Activated CD8-positive, alpha-beta T cell treated with anti-CD3 and anti-CD28 coated beads, Interleukin-2, amount 10 ng/mL, durations not matched to agents 7 days and 5 days (primary cell): ENCODE measurements at regions of chr1 and their contacts with region 1.

Region 1: GRCh38 chr1:207084701-207085180 is 3.9 kb upstream of the C4BPB start:
- DNase-seq: peak; percentile 81
- ATAC-seq: peak; percentile 82
- H3K4me3 Mint-ChIP-seq: no peak overlapping the region
- H3K27ac Mint-ChIP-seq: no peak overlapping the region
- H3K4me1 Mint-ChIP-seq: peaks cover 30% of the 10 kb centered on the region
- H3K27me3 Mint-ChIP-seq: peaks cover 18% of the 10 kb centered on the region

Region 2: DNA sequence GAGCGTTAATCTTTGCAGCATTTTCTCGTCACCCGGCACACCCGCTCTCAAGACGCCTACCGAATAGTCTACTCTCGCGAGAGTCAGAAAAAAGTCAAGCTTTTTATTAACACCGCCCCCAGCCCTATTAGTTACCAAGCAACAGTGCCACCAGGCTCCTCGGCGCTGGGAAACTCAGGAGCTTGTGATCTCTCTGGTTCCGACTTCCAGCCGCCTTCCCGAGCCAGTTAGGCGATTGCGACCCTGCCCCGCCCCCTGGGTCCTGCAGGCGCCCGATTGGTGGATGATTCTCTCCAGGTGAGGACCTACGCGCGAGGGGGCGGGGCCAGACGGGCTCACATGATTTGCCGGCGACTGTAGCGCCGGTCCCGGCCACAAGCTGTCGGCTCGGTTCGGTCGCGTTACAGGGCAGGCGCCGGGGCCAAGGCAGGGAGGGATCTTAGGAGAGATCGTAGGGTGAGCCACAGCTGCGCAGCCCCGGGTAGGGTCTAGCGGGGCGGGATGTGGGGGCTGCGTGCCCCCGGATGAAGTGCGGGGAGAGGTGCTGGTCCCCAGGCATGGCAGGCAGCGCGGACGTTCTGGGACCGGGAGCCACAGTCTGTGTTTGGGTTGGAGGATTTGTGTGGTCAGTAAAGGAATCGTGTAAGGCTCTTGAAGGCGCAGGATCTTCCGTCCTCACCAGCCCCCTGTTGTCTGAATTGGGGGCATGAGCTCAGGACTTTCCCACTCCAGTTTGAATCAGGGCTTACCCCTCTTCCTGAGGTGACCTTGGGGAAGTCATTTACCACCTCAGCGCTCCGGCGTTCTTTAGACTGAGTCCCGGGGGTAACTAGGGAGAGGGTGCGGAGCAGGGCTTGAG is 31.6 kb before region 1 on chr1 and contains the start of gene PFKFB2:
- CTCF ChIA-PET with region 1: interaction called, 67 read pairs
- POLR2A ChIA-PET with region 1: no interaction called
- DNase-seq: peak; percentile 96
- ATAC-seq: peak; percentile 93
- H3K4me3 Mint-ChIP-seq: peak within 1 kb of the TSS; percentile 86
- H3K27ac Mint-ChIP-seq: peak within 1 kb of the TSS; percentile 92
- H3K4me1 Mint-ChIP-seq: peaks cover 46% of the 10 kb centered on the region
- H3K27me3 Mint-ChIP-seq: no peaks in the 10 kb centered on the region
- total RNA-seq, gene PFKFB2: 5.0 to 6.6 TPM

Region 3: GRCh38 chr1:207069858-207070506 is 14.8 kb before region 1 on chr1:
- CTCF ChIA-PET with region 1: interaction called, 16 read pairs
- POLR2A ChIA-PET with region 1: no interaction called
- DNase-seq: no peak
- ATAC-seq: peak; percentile 8
- H3K4me3 Mint-ChIP-seq: no peak overlapping the region
- H3K27ac Mint-ChIP-seq: peak overlapping the region; percentile 88
- H3K4me1 Mint-ChIP-seq: peaks cover 53% of the 10 kb centered on the region
- H3K27me3 Mint-ChIP-seq: no peaks in the 10 kb centered on the region

Region 4: DNA sequence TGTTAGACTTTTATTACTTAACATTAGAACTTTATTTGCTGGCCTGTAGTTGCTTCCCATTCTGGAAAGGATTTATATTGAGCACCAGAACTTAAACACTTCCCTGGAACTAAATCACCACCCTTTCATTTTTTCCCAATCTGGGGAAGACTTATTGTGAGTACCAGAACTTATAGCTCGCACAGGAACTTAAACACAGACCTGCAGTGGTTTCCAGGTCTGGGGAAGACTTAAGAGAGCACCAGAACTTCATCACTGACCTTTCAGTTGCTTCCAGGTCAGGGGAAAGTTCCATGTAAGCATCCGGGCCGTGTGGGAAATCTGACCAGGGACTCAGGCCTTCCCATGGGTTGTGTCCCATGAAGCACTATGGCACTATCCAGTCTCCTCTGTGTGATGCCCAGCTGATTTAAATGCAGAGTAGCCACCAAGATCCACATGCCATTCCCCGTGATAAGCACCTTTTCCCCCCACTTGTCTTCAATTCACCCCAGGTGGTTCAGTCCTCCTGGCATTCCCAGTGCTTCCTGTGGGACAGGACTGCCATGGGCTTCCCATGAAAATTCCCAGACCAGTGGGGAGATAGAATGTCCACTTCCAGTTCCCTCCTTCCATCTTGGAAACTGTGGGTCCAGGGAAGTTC is 68.2 kb after region 1 on chr1:
- CTCF ChIA-PET with region 1: no interaction called
- POLR2A ChIA-PET with region 1: no interaction called
- DNase-seq: no peak
- ATAC-seq: no peak
- H3K4me3 Mint-ChIP-seq: no peak overlapping the region
- H3K27ac Mint-ChIP-seq: no peak overlapping the region
- H3K4me1 Mint-ChIP-seq: no peaks in the 10 kb centered on the region
- H3K27me3 Mint-ChIP-seq: no peaks in the 10 kb centered on the region

Region 5: DNA sequence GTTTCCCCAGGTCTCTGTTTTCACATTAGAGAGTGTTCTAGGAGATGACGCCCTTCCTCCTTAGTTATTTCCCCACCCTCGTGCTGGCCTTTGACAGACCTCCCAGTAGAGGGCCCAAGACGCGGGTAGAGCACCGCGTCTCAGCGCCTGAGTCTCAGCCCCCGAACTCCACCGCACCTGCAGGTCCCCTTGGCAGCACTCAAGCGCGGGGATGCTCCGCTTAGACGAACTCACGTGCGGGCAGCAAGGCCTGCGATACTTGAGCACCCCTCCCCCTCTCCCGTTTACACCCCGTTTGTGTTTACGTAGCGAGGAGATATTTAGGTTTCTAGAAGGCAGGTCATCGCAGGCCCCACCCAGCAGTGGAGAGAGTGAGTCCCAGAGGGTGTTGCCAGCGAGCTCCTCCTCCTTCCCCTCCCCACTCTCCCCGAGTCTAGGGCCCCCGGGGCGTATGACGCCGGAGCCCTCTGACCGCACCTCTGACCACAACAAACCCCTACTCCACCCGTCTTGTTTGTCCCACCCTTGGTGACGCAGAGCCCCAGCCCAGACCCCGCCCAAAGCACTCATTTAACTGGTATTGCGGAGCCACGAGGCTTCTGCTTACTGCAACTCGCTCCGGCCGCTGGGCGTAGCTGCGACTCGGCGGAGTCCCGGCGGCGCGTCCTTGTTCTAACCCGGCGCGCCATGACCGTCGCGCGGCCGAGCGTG is 236.5 kb after region 1 on chr1 and contains the start of gene CD55:
- CTCF ChIA-PET with region 1: interaction called, 8 read pairs
- POLR2A ChIA-PET with region 1: interaction called, 13 read pairs
- DNase-seq: peak; percentile 100
- ATAC-seq: peak; percentile 93
- H3K4me3 Mint-ChIP-seq: peak within 1 kb of the TSS; percentile 92
- H3K27ac Mint-ChIP-seq: peak within 1 kb of the TSS; percentile 99
- H3K4me1 Mint-ChIP-seq: peaks cover 29% of the 10 kb centered on the region
- H3K27me3 Mint-ChIP-seq: no peaks in the 10 kb centered on the region
- total RNA-seq, gene CD55: 82.1 to 85.5 TPM

Region 6: GRCh38 chr1:207336559-207337467 is 252.1 kb after region 1 on chr1:
- CTCF ChIA-PET with region 1: interaction called, 16 read pairs
- POLR2A ChIA-PET with region 1: interaction called, 4 read pairs
- DNase-seq: peak; percentile 88
- ATAC-seq: peak; percentile 78
- H3K4me3 Mint-ChIP-seq: peak overlapping the region; percentile 51
- H3K27ac Mint-ChIP-seq: peak overlapping the region; percentile 93
- H3K4me1 Mint-ChIP-seq: peaks cover 71% of the 10 kb centered on the region
- H3K27me3 Mint-ChIP-seq: no peaks in the 10 kb centered on the region

Region 7: DNA sequence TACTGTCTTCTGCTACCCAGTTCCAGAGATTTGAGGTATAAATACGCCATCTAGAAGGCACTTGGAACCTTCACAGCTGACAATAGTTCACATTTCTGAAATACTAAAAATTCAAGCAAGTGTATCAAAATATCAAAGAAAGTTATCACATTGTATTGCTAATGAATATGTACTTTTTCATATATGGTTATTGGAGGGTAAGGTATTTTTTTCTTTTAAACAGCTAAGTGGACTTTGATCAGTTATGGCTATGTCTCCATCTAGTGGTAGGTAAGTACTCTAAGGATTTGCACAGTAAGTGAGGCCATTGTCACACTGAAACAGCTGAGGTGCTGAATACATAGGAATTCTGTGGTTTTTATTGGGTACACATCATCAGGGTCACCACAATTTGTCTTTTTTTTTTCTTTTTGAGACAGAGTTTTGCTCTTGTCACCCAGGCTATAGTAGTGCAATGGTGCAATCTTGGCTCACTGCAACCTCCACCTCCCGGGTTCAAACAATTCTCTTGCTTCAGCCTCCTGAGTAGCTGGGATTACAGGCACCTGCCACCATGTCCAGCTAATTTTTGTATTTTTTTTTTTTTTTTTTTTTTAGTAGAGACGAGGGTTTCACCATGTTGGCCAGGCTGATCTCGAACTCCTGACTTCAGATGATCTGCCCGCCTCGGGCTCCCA is 320.2 kb after region 1 on chr1:
- CTCF ChIA-PET with region 1: interaction called, 59 read pairs
- POLR2A ChIA-PET with region 1: no interaction called
- DNase-seq: no peak
- ATAC-seq: peak; percentile 86
- H3K4me3 Mint-ChIP-seq: no peak overlapping the region
- H3K27ac Mint-ChIP-seq: no peak overlapping the region
- H3K4me1 Mint-ChIP-seq: peaks cover 11% of the 10 kb centered on the region
- H3K27me3 Mint-ChIP-seq: peaks cover 3% of the 10 kb centered on the region

Region 8: GRCh38 chr1:207499573-207499972 is 414.8 kb after region 1 on chr1:
- CTCF ChIA-PET with region 1: interaction called, 31 read pairs
- POLR2A ChIA-PET with region 1: no interaction called
- DNase-seq: peak; percentile 81
- ATAC-seq: peak; percentile 74
- H3K4me3 Mint-ChIP-seq: no peak overlapping the region
- H3K27ac Mint-ChIP-seq: no peak overlapping the region
- H3K4me1 Mint-ChIP-seq: peaks cover 14% of the 10 kb centered on the region
- H3K27me3 Mint-ChIP-seq: peaks cover 34% of the 10 kb centered on the region